WTC11 (cell line): ENCODE measurements at regions of chr5 and their contacts with region 1.

Region 1: GRCh38 chr5:178330791-178331398 is 98.3 kb upstream of the PHYKPL start:
- DNase-seq: no peak
- ATAC-seq: no peak
- H3K4me3 Mint-ChIP-seq: no peak overlapping the region
- H3K27ac Mint-ChIP-seq: peak overlapping the region; percentile 72; the same call in 1 of the 2 replicates
- H3K4me1 Mint-ChIP-seq: peaks cover 26% of the 10 kb centered on the region
- H3K27me3 Mint-ChIP-seq: no peaks in the 10 kb centered on the region
- CTCF ChIP-seq: no peak

Region 2: DNA sequence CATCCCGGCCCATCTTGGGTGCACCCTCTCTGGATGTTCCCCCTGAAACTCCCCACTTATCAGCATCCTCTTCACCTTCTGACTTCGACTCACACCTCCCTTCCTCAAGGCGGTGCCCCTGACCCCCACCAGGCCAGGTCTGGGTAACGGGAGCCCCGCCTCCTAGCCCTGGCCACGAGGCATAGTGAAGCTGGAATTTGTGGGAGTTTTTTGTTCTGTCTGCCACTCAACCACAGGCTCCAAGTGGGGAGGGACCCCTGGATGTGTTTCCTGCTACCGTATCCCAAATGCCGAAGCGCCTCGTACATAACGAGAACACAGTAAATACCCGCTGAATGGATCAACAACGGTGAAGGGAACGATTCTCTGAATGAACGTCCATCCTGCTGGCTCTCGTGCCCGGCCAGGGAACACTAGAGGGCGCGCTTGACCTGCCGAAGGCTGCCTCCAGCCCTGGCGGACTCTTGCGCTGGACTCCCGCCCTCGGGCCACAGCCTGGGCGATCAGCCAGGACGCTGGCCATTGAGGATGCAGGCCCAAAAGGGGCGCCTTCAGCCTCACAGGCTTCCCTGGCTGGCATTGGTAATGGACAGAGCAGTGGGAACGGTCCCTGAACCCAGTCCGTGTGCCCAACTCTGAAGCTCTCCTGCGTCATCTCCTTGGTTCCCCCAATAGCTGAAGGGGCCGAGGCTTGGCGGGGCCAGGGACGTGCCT is 51.0 kb before region 1 on chr5:
- CTCF ChIA-PET with region 1: interaction called, 10 read pairs
- POLR2A ChIA-PET with region 1: no interaction called
- DNase-seq: peak; percentile 95
- ATAC-seq: peak; percentile 91
- H3K4me3 Mint-ChIP-seq: peak overlapping the region; percentile 41
- H3K27ac Mint-ChIP-seq: peak overlapping the region; percentile 63; the same call in 1 of the 2 replicates
- H3K4me1 Mint-ChIP-seq: peaks cover 4% of the 10 kb centered on the region
- H3K27me3 Mint-ChIP-seq: peaks cover 8% of the 10 kb centered on the region
- CTCF ChIP-seq: peak; percentile 74